Activated CD8-positive, alpha-beta T cell treated with anti-CD3 and anti-CD28 coated beads for 36 hours (primary cell): ENCODE measurements at regions of chr11 and their contacts with region 1.

Region 1: DNA sequence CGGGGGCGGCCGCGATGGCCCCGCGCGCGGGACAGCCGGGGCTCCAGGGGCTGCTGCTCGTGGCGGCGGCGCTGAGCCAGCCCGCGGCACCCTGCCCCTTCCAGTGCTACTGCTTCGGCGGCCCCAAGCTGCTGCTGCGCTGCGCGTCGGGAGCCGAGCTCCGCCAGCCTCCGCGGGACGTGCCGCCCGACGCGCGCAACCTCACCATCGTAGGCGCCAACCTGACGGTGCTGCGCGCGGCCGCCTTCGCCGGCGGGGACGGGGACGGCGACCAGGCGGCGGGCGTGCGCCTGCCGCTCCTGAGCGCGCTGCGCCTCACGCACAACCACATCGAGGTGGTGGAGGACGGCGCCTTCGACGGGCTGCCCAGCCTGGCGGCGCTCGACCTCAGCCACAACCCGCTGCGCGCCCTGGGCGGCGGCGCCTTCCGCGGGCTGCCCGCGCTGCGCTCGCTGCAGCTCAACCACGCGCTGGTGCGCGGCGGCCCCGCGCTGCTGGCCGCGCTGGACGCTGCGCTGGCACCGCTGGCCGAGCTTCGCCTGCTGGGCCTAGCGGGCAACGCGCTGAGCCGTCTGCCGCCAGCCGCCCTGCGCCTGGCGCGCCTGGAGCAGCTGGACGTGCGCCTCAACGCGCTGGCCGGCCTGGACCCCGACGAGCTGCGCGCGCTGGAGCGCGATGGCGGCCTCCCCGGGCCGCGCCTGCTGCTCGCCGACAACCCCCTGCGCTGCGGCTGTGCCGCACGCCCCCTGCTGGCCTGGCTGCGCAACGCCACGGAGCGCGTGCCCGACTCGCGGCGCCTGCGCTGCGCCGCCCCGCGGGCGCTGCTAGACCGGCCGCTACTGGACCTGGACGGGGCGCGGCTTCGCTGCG is 697 bp downstream of the TPBGL start:
- DNase-seq: peak; percentile 83
- ATAC-seq: peak; percentile 95
- H3K4me3 Mint-ChIP-seq: peak overlapping the region; percentile 62
- H3K27ac Mint-ChIP-seq: no peak overlapping the region
- H3K4me1 Mint-ChIP-seq: peaks cover 10% of the 10 kb centered on the region
- H3K27me3 Mint-ChIP-seq: peaks cover 29% of the 10 kb centered on the region
- CTCF ChIP-seq: peak; percentile 92

Region 2: DNA sequence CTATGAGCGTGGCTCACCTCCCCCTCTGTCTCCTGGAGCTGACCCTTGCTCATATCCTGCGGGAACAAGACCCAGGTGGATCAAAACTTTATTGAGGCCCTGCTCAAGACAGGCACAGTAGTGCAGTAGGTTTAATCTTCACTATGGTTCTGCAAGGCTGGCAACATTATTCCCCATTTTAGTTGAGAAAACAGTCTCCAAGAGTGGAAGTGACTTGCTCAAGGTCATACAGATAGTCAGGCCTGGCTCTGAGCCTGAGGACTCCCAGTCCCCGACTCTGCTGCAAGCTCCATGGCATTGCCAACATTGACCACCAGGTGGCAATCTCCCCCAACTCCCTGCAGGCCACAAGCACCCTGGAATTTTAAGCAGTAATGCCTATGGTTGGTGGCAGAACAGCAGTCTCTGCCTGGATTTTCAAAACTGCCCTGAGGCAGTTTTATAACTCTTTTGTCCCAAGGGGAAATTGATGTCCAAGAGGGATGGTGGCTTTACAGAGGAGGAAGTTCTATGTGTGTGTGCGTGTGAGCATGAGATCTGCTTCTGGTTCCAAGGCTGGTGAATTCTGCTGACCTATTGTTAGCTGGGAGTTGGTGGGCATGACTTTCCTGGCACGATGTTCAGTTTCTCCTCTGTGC is 218.4 kb before region 1 on chr11:
- CTCF ChIA-PET with region 1: interaction called, 10 read pairs
- POLR2A ChIA-PET with region 1: no interaction called
- intact Hi-C with region 1: no loop called
- DNase-seq: peak; percentile 82
- ATAC-seq: peak; percentile 94
- H3K4me3 Mint-ChIP-seq: no peak overlapping the region
- H3K27ac Mint-ChIP-seq: no peak overlapping the region
- H3K4me1 Mint-ChIP-seq: no peaks in the 10 kb centered on the region
- H3K27me3 Mint-ChIP-seq: no peaks in the 10 kb centered on the region
- CTCF ChIP-seq: peak; percentile 98

Region 3: GRCh38 chr11:75204685-75205563 is 36.3 kb before region 1 on chr11:
- CTCF ChIA-PET with region 1: interaction called, 41 read pairs
- POLR2A ChIA-PET with region 1: no interaction called
- intact Hi-C with region 1: no loop called
- DNase-seq: peak; percentile 93
- ATAC-seq: peak; percentile 99
- H3K4me3 Mint-ChIP-seq: no peak overlapping the region
- H3K27ac Mint-ChIP-seq: no peak overlapping the region
- H3K4me1 Mint-ChIP-seq: no peaks in the 10 kb centered on the region
- H3K27me3 Mint-ChIP-seq: peaks cover 1% of the 10 kb centered on the region
- CTCF ChIP-seq: peak; percentile 87

Region 4: GRCh38 chr11:75214411-75214821 is 26.9 kb before region 1 on chr11:
- CTCF ChIA-PET with region 1: interaction called, 18 read pairs
- POLR2A ChIA-PET with region 1: no interaction called
- intact Hi-C with region 1: no loop called
- DNase-seq: peak; percentile 90
- ATAC-seq: peak; percentile 88
- H3K4me3 Mint-ChIP-seq: no peak overlapping the region
- H3K27ac Mint-ChIP-seq: no peak overlapping the region
- H3K4me1 Mint-ChIP-seq: no peaks in the 10 kb centered on the region
- H3K27me3 Mint-ChIP-seq: peaks cover 25% of the 10 kb centered on the region
- CTCF ChIP-seq: no peak

Region 5: GRCh38 chr11:75223954-75224643 is 17.2 kb before region 1 on chr11:
- CTCF ChIA-PET with region 1: interaction called, 18 read pairs
- POLR2A ChIA-PET with region 1: interaction called, 6 read pairs
- intact Hi-C with region 1: no loop called
- DNase-seq: no peak
- ATAC-seq: no peak
- H3K4me3 Mint-ChIP-seq: no peak overlapping the region
- H3K27ac Mint-ChIP-seq: no peak overlapping the region
- H3K4me1 Mint-ChIP-seq: no peaks in the 10 kb centered on the region
- H3K27me3 Mint-ChIP-seq: no peaks in the 10 kb centered on the region
- CTCF ChIP-seq: no peak

Region 6: GRCh38 chr11:75263944-75264349 is 22.7 kb after region 1 on chr11:
- CTCF ChIA-PET with region 1: interaction called, 12 read pairs
- POLR2A ChIA-PET with region 1: interaction called, 3 read pairs
- intact Hi-C with region 1: no loop called
- DNase-seq: peak; percentile 52
- ATAC-seq: peak; percentile 61
- H3K4me3 Mint-ChIP-seq: no peak overlapping the region
- H3K27ac Mint-ChIP-seq: peak overlapping the region; percentile 23
- H3K4me1 Mint-ChIP-seq: peaks cover 41% of the 10 kb centered on the region
- H3K27me3 Mint-ChIP-seq: no peaks in the 10 kb centered on the region
- CTCF ChIP-seq: no peak

Region 7: DNA sequence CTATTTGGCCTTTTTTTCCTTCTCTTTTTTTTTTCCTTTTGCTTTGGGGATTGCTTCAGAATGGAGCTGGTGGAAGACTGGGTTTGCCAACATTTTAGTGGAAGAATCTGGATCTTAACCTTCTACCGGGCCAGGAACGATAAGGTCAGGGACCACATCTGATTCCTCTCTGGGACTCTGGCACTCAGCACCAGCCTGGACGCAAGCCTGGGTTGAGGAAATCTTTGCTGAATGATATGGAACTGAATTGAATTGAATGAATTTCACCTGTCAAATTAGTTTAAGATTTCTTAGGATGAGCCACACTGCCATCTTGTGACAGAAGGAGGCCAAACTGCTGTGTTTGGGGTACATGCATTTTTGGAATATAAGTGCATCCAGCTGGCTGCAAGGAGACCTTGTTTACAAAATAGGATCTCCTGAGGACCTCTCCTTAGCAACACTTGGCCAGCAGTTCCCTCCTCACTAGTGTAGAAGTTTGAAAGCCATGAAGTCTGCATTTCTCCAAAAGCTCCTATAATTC is 29.7 kb after region 1 on chr11:
- CTCF ChIA-PET with region 1: interaction called, 19 read pairs
- POLR2A ChIA-PET with region 1: interaction called, 3 read pairs
- intact Hi-C with region 1: no loop called
- DNase-seq: peak; percentile 37
- ATAC-seq: no peak
- H3K4me3 Mint-ChIP-seq: no peak overlapping the region
- H3K27ac Mint-ChIP-seq: no peak overlapping the region
- H3K4me1 Mint-ChIP-seq: peaks cover 30% of the 10 kb centered on the region
- H3K27me3 Mint-ChIP-seq: no peaks in the 10 kb centered on the region
- CTCF ChIP-seq: peak; percentile 36